Endothelial cell of umbilical vein (primary cell): ENCODE measurements at regions of chr1 and their contacts with region 1.

Region 1: GRCh38 chr1:224753491-224753890 is 137.4 kb downstream of the CNIH3 start:
- DNase-seq: no peak
- H3K4me3 ChIP-seq: no peak overlapping the region
- H3K27ac ChIP-seq: no peak overlapping the region
- H3K4me1 ChIP-seq: no peaks in the 10 kb centered on the region
- H3K27me3 ChIP-seq: no peaks in the 10 kb centered on the region
- CTCF ChIP-seq: no peak
- POLR2A ChIP-seq: no peak

Region 2: GRCh38 chr1:224407571-224408560 is 345.6 kb before region 1 on chr1:
- CTCF ChIA-PET with region 1: no interaction called
- POLR2A ChIA-PET with region 1: no interaction called
- dilution Hi-C with region 1: no loop called
- intact Hi-C with region 1: no loop called
- DNase-seq: no peak
- H3K4me3 ChIP-seq: no peak overlapping the region
- H3K27ac ChIP-seq: no peak overlapping the region
- H3K4me1 ChIP-seq: peaks cover 8% of the 10 kb centered on the region
- H3K27me3 ChIP-seq: no peaks in the 10 kb centered on the region
- CTCF ChIP-seq: no peak
- POLR2A ChIP-seq: no peak

Region 3: GRCh38 chr1:224799083-224799482 is 45.6 kb after region 1 on chr1:
- CTCF ChIA-PET with region 1: no interaction called
- POLR2A ChIA-PET with region 1: no interaction called
- dilution Hi-C with region 1: no loop called
- intact Hi-C with region 1: loop called (anchors 5 kb)
- DNase-seq: no peak
- H3K4me3 ChIP-seq: no peak overlapping the region
- H3K27ac ChIP-seq: no peak overlapping the region
- H3K4me1 ChIP-seq: no peaks in the 10 kb centered on the region
- H3K27me3 ChIP-seq: no peaks in the 10 kb centered on the region
- CTCF ChIP-seq: no peak
- POLR2A ChIP-seq: no peak